Activated naive CD4-positive, alpha-beta T cell treated with anti-CD3 and anti-CD28 coated beads for 36 hours (primary cell): ENCODE measurements at regions of chr4 and their contacts with region 1.

Region 1: DNA sequence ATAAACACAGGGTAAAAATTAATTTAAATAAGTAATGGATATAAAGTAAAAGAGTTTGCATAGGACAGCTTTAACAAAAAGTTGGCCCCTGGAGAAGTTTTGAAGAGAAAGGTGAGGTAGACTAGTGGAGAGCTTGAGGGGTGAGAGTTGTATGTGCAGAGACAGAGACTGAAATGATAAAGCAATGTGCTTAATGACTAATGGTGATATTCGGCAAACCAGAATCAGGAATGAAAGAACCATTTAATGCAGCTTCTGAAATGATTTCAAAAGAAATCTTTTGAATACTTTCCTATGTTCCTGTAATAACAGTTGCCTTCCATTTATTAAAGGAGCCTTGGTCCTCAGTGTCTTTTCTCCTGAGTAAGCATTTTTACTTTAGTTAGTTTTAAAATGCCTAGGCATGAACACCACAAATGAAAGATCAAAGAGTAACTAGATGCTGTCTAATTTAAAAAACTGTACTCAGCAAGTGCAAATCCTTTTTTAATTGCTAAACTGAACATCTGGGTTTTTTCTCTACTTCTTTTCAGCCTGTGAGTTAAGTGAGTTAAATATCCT is 28.5 kb downstream of the CAMK2D start:
- DNase-seq: no peak
- H3K4me3 Mint-ChIP-seq: no peak overlapping the region
- H3K27ac Mint-ChIP-seq: peak overlapping the region; percentile 59
- H3K4me1 Mint-ChIP-seq: peaks cover 73% of the 10 kb centered on the region
- H3K27me3 Mint-ChIP-seq: no peaks in the 10 kb centered on the region

Region 2: GRCh38 chr4:113474017-113474416 is 259.0 kb before region 1 on chr4:
- CTCF ChIA-PET with region 1: no interaction called
- intact Hi-C with region 1: loop called (anchors 1 kb)
- DNase-seq: peak; percentile 55
- H3K4me3 Mint-ChIP-seq: no peak overlapping the region
- H3K27ac Mint-ChIP-seq: peak overlapping the region; percentile 84
- H3K4me1 Mint-ChIP-seq: peaks cover 56% of the 10 kb centered on the region
- H3K27me3 Mint-ChIP-seq: no peaks in the 10 kb centered on the region

Region 3: GRCh38 chr4:113692809-113693411 is 40.1 kb before region 1 on chr4:
- CTCF ChIA-PET with region 1: interaction called, 3 read pairs
- intact Hi-C with region 1: loop called (anchors 1 kb)
- DNase-seq: no peak
- H3K4me3 Mint-ChIP-seq: peak overlapping the region; percentile 26
- H3K27ac Mint-ChIP-seq: peak overlapping the region; percentile 68
- H3K4me1 Mint-ChIP-seq: peaks cover 35% of the 10 kb centered on the region
- H3K27me3 Mint-ChIP-seq: no peaks in the 10 kb centered on the region

Region 4: GRCh38 chr4:113708250-113708649 is 24.8 kb before region 1 on chr4:
- CTCF ChIA-PET with region 1: interaction called, 4 read pairs
- intact Hi-C with region 1: loop called (anchors 2 kb)
- DNase-seq: no peak
- H3K4me3 Mint-ChIP-seq: no peak overlapping the region
- H3K27ac Mint-ChIP-seq: no peak overlapping the region
- H3K4me1 Mint-ChIP-seq: peaks cover 56% of the 10 kb centered on the region
- H3K27me3 Mint-ChIP-seq: no peaks in the 10 kb centered on the region

Region 5: GRCh38 chr4:113744667-113745240 is 11.7 kb after region 1 on chr4:
- CTCF ChIA-PET with region 1: no interaction called
- intact Hi-C with region 1: loop called (anchors 1 kb)
- DNase-seq: peak; percentile 25
- H3K4me3 Mint-ChIP-seq: no peak overlapping the region
- H3K27ac Mint-ChIP-seq: no peak overlapping the region
- H3K4me1 Mint-ChIP-seq: peaks cover 29% of the 10 kb centered on the region
- H3K27me3 Mint-ChIP-seq: no peaks in the 10 kb centered on the region

Region 6: GRCh38 chr4:113756005-113756410 is 23.0 kb after region 1 on chr4:
- CTCF ChIA-PET with region 1: interaction called, 3 read pairs
- intact Hi-C with region 1: loop called (anchors 1 kb)
- DNase-seq: no peak
- H3K4me3 Mint-ChIP-seq: no peak overlapping the region
- H3K27ac Mint-ChIP-seq: no peak overlapping the region
- H3K4me1 Mint-ChIP-seq: peaks cover 47% of the 10 kb centered on the region
- H3K27me3 Mint-ChIP-seq: no peaks in the 10 kb centered on the region